ENCODE measurements at regions of chr12 and their contacts with region 1.

Region 1: GRCh38 chr12:48988030-48988649 is 10.0 kb downstream of the WNT1 start:
- DNase-seq: peak; percentile 87
- ATAC-seq: peak; percentile 89
- H3K4me3 Mint-ChIP-seq: no peak overlapping the region
- H3K27ac Mint-ChIP-seq: no peak overlapping the region
- H3K4me1 Mint-ChIP-seq: no peaks in the 10 kb centered on the region
- H3K27me3 Mint-ChIP-seq: peaks cover 29% of the 10 kb centered on the region
- CTCF ChIP-seq: peak; percentile 96

Region 2: DNA sequence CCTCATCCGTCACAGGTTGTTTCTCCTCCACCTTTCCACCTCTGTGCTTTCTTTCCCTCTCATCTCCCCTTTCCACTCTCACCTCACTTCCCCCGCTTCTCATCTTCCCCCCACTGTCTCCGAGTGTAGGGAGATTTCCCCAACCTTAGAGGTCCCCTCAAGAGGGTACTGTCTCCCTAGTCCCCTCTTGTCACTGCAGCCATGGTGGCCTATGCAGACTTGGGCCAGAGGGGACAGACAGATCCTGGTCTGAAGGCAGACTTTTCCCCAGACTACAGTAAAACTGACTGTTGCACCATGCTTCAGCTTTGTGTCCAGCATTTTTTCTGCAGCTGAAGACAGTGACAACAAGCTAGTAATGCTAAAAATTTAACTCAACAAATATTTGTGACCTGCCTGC is 347.3 kb before region 1 on chr12:
- CTCF ChIA-PET with region 1: no interaction called
- POLR2A ChIA-PET with region 1: no interaction called
- intact Hi-C with region 1: no loop called
- DNase-seq: no peak
- ATAC-seq: no peak
- H3K4me3 Mint-ChIP-seq: no peak overlapping the region
- H3K27ac Mint-ChIP-seq: no peak overlapping the region
- H3K4me1 Mint-ChIP-seq: peaks cover 4% of the 10 kb centered on the region
- H3K27me3 Mint-ChIP-seq: no peaks in the 10 kb centered on the region
- CTCF ChIP-seq: no peak

Region 3: GRCh38 chr12:48788854-48789796 is 199.0 kb before region 1 on chr12 and contains the start of gene ADCY6:
- CTCF ChIA-PET with region 1: no interaction called
- POLR2A ChIA-PET with region 1: no interaction called
- intact Hi-C with region 1: no loop called
- DNase-seq: no peak
- ATAC-seq: no peak
- H3K4me3 Mint-ChIP-seq: peak within 1 kb of the TSS; percentile 47
- H3K27ac Mint-ChIP-seq: no peak within 1 kb of the TSS
- H3K4me1 Mint-ChIP-seq: peaks cover 5% of the 10 kb centered on the region
- H3K27me3 Mint-ChIP-seq: peaks cover 44% of the 10 kb centered on the region
- CTCF ChIP-seq: no peak
- total RNA-seq, gene ADCY6: not detected

Region 4: DNA sequence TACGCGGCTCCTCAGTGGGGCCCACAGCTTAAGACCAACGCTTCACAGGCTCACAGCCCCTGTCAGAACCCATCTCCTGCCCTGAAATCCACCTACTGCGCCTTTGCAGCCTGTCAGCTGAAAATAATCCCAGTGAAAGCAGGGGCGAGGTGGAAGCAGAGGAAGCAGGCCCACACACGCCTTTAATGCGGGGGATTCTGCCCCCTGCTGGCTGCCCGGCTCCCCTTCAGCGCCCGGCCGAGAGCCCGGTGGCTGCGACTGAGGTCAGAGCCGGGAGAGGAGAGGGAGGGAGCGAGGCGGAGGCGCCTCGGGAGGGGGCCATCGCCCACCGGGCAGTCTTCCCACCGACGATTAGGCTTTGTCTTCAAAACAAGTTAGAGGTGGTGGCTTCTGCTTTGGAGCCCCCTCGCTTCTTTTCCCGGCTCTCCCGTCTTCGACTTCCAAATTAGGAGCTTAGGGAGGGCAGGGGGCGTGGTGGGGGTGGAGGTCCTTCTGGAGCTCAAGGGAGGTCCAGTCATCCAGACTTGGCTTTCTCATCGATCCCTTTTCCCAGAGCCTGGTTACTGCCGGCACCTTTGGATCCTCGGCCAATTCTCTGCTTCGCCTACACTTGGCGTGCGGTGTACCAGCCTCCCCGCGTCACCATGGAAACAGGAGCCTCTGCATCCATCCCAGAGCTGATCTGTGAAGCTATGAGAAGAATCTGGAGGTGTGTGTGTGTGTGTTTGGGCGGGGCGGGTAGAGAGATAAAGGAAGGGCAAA is 97.3 kb before region 1 on chr12:
- CTCF ChIA-PET with region 1: interaction called, 20 read pairs
- POLR2A ChIA-PET with region 1: no interaction called
- intact Hi-C with region 1: no loop called
- DNase-seq: peak; percentile 86
- ATAC-seq: peak; percentile 97
- H3K4me3 Mint-ChIP-seq: no peak overlapping the region
- H3K27ac Mint-ChIP-seq: no peak overlapping the region
- H3K4me1 Mint-ChIP-seq: no peaks in the 10 kb centered on the region
- H3K27me3 Mint-ChIP-seq: peaks cover 7% of the 10 kb centered on the region
- CTCF ChIP-seq: peak; percentile 98

Region 5: GRCh38 chr12:48910196-48910595 is 77.9 kb before region 1 on chr12:
- CTCF ChIA-PET with region 1: interaction called, 13 read pairs
- POLR2A ChIA-PET with region 1: no interaction called
- intact Hi-C with region 1: no loop called
- DNase-seq: no peak
- ATAC-seq: no peak
- H3K4me3 Mint-ChIP-seq: no peak overlapping the region
- H3K27ac Mint-ChIP-seq: no peak overlapping the region
- H3K4me1 Mint-ChIP-seq: no peaks in the 10 kb centered on the region
- H3K27me3 Mint-ChIP-seq: no peaks in the 10 kb centered on the region
- CTCF ChIP-seq: no peak

Region 6: GRCh38 chr12:48924617-48925303 is 63.4 kb before region 1 on chr12:
- CTCF ChIA-PET with region 1: interaction called, 51 read pairs
- POLR2A ChIA-PET with region 1: interaction called, 4 read pairs
- intact Hi-C with region 1: no loop called
- DNase-seq: peak; percentile 87
- ATAC-seq: peak; percentile 76
- H3K4me3 Mint-ChIP-seq: peak overlapping the region; percentile 88
- H3K27ac Mint-ChIP-seq: peak overlapping the region; percentile 96
- H3K4me1 Mint-ChIP-seq: peaks cover 48% of the 10 kb centered on the region
- H3K27me3 Mint-ChIP-seq: no peaks in the 10 kb centered on the region
- CTCF ChIP-seq: peak; percentile 85

Region 7: DNA sequence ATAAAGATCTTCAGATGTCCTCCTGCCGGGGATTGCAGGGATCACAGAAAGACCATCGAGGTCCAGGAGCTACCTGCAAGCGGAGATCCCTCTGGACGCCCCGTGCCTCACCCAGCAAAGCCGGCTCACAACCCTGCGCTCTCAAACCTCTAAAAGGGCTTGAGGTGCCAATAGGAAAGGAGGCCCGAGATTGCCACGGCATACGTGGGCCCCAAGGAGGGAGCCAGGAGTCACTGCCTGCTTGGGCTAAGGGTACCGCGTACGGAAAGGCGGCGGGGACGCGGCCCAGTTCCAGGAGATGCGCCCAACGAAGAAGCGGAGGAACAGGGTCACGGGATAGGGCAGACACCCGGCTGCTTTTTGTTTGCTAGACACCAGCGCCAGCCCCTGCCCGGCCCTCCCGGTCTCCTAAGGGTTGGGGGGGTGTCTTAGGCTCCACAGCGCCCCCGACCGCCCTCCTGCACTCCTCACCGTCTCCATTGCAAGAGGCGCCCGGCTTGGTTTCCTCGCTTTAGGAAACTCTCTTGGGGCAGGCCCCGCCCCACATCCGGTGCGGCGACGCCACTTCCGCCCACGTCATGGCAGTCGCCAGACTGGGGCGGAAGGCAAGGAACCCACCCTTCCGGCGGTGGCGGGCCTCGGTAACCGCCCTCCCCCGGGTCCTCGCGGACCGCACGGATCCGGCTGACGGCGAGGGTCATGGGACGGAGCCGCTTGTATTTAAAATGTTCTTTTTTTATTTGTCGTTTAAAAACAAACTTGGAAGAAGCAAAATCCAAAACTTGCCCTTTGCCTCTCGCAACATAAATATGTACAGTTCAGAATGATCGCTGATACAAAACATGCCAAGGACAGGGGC is 30.4 kb after region 1 on chr12 and contains the start of gene PRKAG1:
- CTCF ChIA-PET with region 1: interaction called, 50 read pairs
- POLR2A ChIA-PET with region 1: interaction called, 4 read pairs
- intact Hi-C with region 1: no loop called
- DNase-seq: peak; percentile 96
- ATAC-seq: peak; percentile 90
- H3K4me3 Mint-ChIP-seq: peak within 1 kb of the TSS; percentile 95
- H3K27ac Mint-ChIP-seq: peak within 1 kb of the TSS; percentile 98
- H3K4me1 Mint-ChIP-seq: peaks cover 23% of the 10 kb centered on the region
- H3K27me3 Mint-ChIP-seq: no peaks in the 10 kb centered on the region
- CTCF ChIP-seq: peak; percentile 57
- total RNA-seq, gene PRKAG1: 43.3 to 47.3 TPM

Region 8: GRCh38 chr12:49060237-49061156 is 72.4 kb after region 1 on chr12 and contains the start of gene KMT2D:
- CTCF ChIA-PET with region 1: interaction called, 10 read pairs
- POLR2A ChIA-PET with region 1: no interaction called
- intact Hi-C with region 1: no loop called
- DNase-seq: peak; percentile 92
- ATAC-seq: peak; percentile 76
- H3K4me3 Mint-ChIP-seq: peak within 1 kb of the TSS; percentile 97
- H3K27ac Mint-ChIP-seq: peak within 1 kb of the TSS; percentile 98
- H3K4me1 Mint-ChIP-seq: peaks cover 39% of the 10 kb centered on the region
- H3K27me3 Mint-ChIP-seq: no peaks in the 10 kb centered on the region
- CTCF ChIP-seq: no peak
- total RNA-seq, gene KMT2D: 57.5 to 62.3 TPM

Region 9: DNA sequence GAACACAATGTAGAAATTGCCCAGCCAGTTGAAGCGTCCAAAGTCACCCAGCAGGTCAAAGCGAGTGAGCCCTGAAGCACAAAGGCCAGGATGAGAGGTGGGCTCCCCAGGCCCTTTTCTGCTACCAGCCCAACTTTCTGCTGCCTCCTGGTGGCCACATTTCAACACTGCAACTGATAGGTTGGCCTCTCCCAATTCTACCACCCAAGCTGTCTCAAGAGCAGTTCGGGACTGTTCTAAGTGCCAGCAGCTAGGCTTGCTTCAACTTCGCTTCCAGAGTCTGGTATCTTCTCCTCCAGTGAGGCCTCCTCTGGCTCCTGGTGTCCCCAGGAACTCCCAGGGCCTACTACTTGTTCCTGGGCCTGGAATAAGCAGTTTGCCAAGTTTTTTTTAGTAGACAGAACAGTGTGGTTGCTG is 109.9 kb after region 1 on chr12:
- CTCF ChIA-PET with region 1: interaction called, 15 read pairs
- POLR2A ChIA-PET with region 1: no interaction called
- intact Hi-C with region 1: no loop called
- DNase-seq: peak; percentile 81
- ATAC-seq: peak; percentile 87
- H3K4me3 Mint-ChIP-seq: no peak overlapping the region
- H3K27ac Mint-ChIP-seq: no peak overlapping the region
- H3K4me1 Mint-ChIP-seq: peaks cover 7% of the 10 kb centered on the region
- H3K27me3 Mint-ChIP-seq: peaks cover 21% of the 10 kb centered on the region
- CTCF ChIP-seq: peak; percentile 87

Region 10: GRCh38 chr12:49154221-49154620 is 166.1 kb after region 1 on chr12:
- CTCF ChIA-PET with region 1: no interaction called
- POLR2A ChIA-PET with region 1: no interaction called
- intact Hi-C with region 1: no loop called
- DNase-seq: no peak
- ATAC-seq: no peak
- H3K4me3 Mint-ChIP-seq: no peak overlapping the region
- H3K27ac Mint-ChIP-seq: no peak overlapping the region
- H3K4me1 Mint-ChIP-seq: peaks cover 2% of the 10 kb centered on the region
- H3K27me3 Mint-ChIP-seq: no peaks in the 10 kb centered on the region
- CTCF ChIP-seq: no peak

Measured in activated CD8-positive, alpha-beta T cell treated with anti-CD3 and anti-CD28 coated beads for 36 hours (primary cell).